ENCODE measurements at regions of chr18 and their contacts with region 1.

Region 1: GRCh38 chr18:24014062-24014985 is at the start of gene TTC39C:
- DNase-seq: peak; percentile 80
- H3K4me3 Mint-ChIP-seq: peak within 1 kb of the TSS; percentile 92
- H3K27ac Mint-ChIP-seq: peak within 1 kb of the TSS; percentile 84
- H3K4me1 Mint-ChIP-seq: peaks cover 73% of the 10 kb centered on the region
- H3K27me3 Mint-ChIP-seq: no peaks in the 10 kb centered on the region
- total RNA-seq, gene TTC39C: 14.3 and 20.1 TPM in 2 replicates

Region 2: GRCh38 chr18:23805898-23806297 is 208.4 kb before region 1 on chr18:
- intact Hi-C with region 1: no loop called
- DNase-seq: no peak
- H3K4me3 Mint-ChIP-seq: no peak overlapping the region
- H3K27ac Mint-ChIP-seq: no peak overlapping the region
- H3K4me1 Mint-ChIP-seq: peaks cover 8% of the 10 kb centered on the region
- H3K27me3 Mint-ChIP-seq: peaks cover 30% of the 10 kb centered on the region

Region 3: DNA sequence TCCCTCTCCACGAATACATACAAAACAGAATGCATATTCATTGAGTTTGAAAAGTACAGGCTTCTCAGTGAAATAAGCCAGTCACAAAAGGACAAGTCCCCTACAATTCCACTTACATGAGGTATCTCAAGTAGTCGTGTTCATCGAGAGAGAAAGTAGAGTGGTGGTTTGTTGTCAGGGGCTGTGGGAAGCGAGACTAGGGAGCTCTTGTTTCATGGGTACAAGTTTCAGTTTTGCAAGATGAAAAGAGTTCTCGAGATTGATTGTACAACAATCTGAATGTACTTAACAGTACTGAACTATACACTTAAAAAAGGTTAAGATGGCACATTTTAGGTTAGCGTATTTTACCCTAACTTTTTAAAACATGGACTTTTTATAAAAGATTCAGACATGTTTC is 71.2 kb before region 1 on chr18:
- intact Hi-C with region 1: loop called (anchors 2 kb)
- DNase-seq: peak; percentile 39
- H3K4me3 Mint-ChIP-seq: peak overlapping the region; percentile 47
- H3K27ac Mint-ChIP-seq: peak overlapping the region; percentile 1
- H3K4me1 Mint-ChIP-seq: peaks cover 40% of the 10 kb centered on the region
- H3K27me3 Mint-ChIP-seq: peaks cover 48% of the 10 kb centered on the region

Region 4: GRCh38 chr18:23992089-23992940 is 22.0 kb before region 1 on chr18:
- intact Hi-C with region 1: loop called (anchors 2 kb)
- DNase-seq: peak; percentile 20
- H3K4me3 Mint-ChIP-seq: peak overlapping the region; percentile 15
- H3K27ac Mint-ChIP-seq: peak overlapping the region; percentile 28
- H3K4me1 Mint-ChIP-seq: peaks cover 42% of the 10 kb centered on the region
- H3K27me3 Mint-ChIP-seq: peaks cover 39% of the 10 kb centered on the region

Region 5: GRCh38 chr18:24051031-24051947 is 37.0 kb after region 1 on chr18:
- intact Hi-C with region 1: loop called (anchors 1 kb)
- DNase-seq: no peak
- H3K4me3 Mint-ChIP-seq: peak overlapping the region; percentile 33
- H3K27ac Mint-ChIP-seq: peak overlapping the region; percentile 80
- H3K4me1 Mint-ChIP-seq: peaks cover 62% of the 10 kb centered on the region
- H3K27me3 Mint-ChIP-seq: no peaks in the 10 kb centered on the region

Region 6: DNA sequence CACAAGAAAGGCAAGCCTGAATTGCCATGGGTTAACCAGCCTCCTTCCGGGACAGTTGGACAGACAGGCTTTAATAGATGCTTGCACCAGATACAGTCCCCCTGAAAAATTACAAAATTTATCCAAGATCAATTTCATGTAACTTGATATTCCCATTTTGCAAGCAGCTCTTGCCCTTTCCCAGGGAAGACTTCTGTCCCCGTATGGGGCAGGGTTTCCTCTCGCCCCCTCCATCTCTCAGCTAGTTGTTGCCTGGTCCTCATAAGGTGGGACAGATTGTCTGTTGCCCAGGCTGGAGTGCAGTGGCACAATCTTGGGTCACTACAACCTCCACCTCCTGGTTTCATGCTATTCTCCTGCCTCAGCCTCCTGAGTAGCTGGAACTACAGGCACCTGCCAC is 61.4 kb after region 1 on chr18:
- intact Hi-C with region 1: loop called (anchors 1 kb)
- DNase-seq: no peak
- H3K4me3 Mint-ChIP-seq: no peak overlapping the region
- H3K27ac Mint-ChIP-seq: peak overlapping the region; percentile 77
- H3K4me1 Mint-ChIP-seq: peaks cover 32% of the 10 kb centered on the region
- H3K27me3 Mint-ChIP-seq: no peaks in the 10 kb centered on the region

Measured in activated T-helper 2 cell treated with anti-CD3 and anti-CD28 coated beads, Interferon-gamma antibody, Interleukin-2, Interleukin-4, amounts not matched to agents 10 μg/mL and 5 μg/mL and 100 μg/mL, durations not matched to agents 14 hours and 24 hours and 36 hours (primary cell).